Activated CD8-positive, alpha-beta memory T cell treated with anti-CD3 and anti-CD28 coated beads, Interleukin-2, amount 10 ng/mL, durations not matched to agents 7 days and 5 days (primary cell): ENCODE measurements at regions of chr1 and their contacts with region 1.

Region 1: GRCh38 chr1:163315773-163316374 is 5.9 kb upstream of the NUF2 start:
- DNase-seq: peak; percentile 57
- ATAC-seq: no peak
- H3K4me3 Mint-ChIP-seq: no peak overlapping the region
- H3K27ac Mint-ChIP-seq: no peak overlapping the region
- H3K4me1 Mint-ChIP-seq: peaks cover 7% of the 10 kb centered on the region
- H3K27me3 Mint-ChIP-seq: no peaks in the 10 kb centered on the region

Region 2: GRCh38 chr1:162854245-162854882 is 461.5 kb before region 1 on chr1:
- CTCF ChIA-PET with region 1: interaction called, 18 read pairs
- DNase-seq: peak; percentile 69
- ATAC-seq: peak; percentile 70
- H3K4me3 Mint-ChIP-seq: no peak overlapping the region
- H3K27ac Mint-ChIP-seq: no peak overlapping the region
- H3K4me1 Mint-ChIP-seq: no peaks in the 10 kb centered on the region
- H3K27me3 Mint-ChIP-seq: peaks cover 15% of the 10 kb centered on the region

Region 3: DNA sequence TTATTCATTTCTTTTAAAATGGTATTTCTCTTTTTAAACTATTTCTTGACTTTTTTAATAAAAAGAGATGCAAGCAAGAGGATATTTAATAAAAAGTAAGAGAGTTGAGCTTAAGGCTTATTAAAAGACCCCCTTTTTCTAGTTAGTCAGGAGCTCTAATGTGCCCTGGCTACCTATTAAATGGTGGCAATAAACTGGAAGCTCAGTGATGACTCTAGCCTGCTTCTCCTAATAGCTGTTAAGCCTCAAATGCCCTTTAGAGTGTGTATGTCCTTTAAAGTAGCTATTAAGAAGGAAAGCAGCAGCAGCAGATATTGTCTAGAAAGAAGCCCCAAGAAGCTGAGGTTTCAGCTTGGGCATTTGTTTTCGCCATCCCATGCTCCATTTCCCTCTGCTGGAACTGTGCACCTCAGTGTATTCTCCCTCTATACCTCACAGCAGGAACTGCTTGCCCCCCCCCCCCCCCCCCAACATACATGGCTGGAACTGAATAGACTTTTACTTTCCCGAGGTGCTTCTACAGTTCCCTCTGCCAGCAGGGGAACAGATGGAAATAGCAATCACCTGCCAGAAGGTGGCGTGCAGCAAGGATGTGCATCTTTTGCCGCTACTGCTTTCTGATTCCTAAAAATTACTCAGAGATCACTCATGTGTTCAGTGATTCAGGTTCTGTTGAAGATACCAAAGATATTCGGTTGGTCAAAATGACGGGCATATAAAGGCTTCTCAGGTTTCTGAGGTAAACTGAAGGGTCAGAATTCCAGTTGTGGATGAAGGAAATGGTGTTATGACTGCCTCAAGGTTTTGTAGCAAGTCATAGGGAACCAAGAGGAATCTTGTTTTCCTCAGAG is 244.2 kb before region 1 on chr1:
- CTCF ChIA-PET with region 1: interaction called, 35 read pairs
- DNase-seq: peak; percentile 61
- ATAC-seq: no peak
- H3K4me3 Mint-ChIP-seq: no peak overlapping the region
- H3K27ac Mint-ChIP-seq: no peak overlapping the region
- H3K4me1 Mint-ChIP-seq: no peaks in the 10 kb centered on the region
- H3K27me3 Mint-ChIP-seq: peaks cover 45% of the 10 kb centered on the region

Region 4: DNA sequence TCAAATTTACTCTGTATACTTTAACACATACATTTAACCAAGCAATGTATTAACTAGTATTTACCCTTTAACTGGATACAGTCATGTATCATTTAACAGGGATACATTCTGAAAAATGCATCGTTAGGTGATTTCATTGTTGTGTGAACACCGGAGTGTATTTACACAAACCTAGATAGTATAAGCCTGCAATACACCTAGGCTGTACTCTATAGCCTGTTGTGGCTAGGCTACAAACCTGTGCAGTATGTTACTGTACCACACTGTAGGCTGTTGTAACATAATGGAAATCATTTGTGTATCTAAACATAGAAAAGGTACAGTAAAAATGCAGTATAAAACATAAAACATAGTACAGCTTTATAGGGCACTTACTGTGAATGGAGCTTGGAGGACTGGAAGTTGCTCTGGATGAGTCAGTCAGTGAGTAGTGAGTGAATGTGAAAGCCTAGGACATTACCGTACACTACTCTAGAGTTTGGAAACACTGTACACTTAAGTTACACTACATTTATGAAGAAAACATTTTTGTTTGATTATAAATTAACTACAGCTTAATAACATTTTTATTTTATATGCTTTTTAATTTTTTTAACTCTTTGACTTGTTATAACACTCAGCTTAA is 225.4 kb before region 1 on chr1:
- CTCF ChIA-PET with region 1: no interaction called
- DNase-seq: no peak
- ATAC-seq: no peak
- H3K4me3 Mint-ChIP-seq: no peak overlapping the region
- H3K27ac Mint-ChIP-seq: no peak overlapping the region
- H3K4me1 Mint-ChIP-seq: no peaks in the 10 kb centered on the region
- H3K27me3 Mint-ChIP-seq: no peaks in the 10 kb centered on the region